Posterior cingulate gyrus (tissue), 11 donors: ENCODE measurements at regions of chr12 and their contacts with region 1.

Region 1: GRCh38 chr12:6533923-6534694 is at the start of gene GAPDH:
- DNase-seq: peak; percentile 91 to 100 (median 98)

Region 2: GRCh38 chr12:6423267-6424007 is 110.7 kb before region 1 on chr12:
- intact Hi-C with region 1: loop called (anchors 2 kb)
- DNase-seq: peak; percentile 30 to 95 (median 70)

Region 3: GRCh38 chr12:6493497-6494257 is 40.4 kb before region 1 on chr12 and contains the start of gene NCAPD2:
- intact Hi-C with region 1: loop called (anchors 2 kb)
- DNase-seq: peak; percentile 94 to 99 (median 98)